ENCODE measurements at regions of chr9 and their contacts with region 1.

Region 1: GRCh38 chr9:132391449-132391848 is 15.2 kb downstream of the TTF1 start:
- DNase-seq: no peak
- H3K4me3 ChIP-seq: no peak overlapping the region
- H3K27ac ChIP-seq: no peak overlapping the region
- H3K4me1 ChIP-seq: no peaks in the 10 kb centered on the region
- H3K27me3 ChIP-seq: no peaks in the 10 kb centered on the region
- CTCF ChIP-seq: no peak

Region 2: DNA sequence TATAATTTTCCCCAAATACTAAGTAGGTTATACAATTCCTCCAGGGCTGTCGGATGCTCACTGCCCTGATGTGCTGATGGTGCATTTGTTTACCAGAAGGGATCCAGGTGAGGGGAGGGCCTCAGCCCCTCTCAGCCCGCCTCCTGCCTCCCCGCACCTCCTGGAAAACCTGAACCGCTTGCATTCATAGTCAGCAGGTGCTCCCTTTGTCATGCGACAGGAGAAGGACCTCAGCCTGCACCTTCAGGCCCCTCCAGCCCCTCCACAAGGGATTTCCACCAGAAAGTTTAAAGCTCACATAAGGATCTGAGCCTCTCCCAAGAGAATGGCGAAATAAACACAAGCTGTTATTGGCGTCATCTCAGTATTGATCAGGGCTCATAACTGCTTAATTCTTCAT is 266.1 kb before region 1 on chr9:
- CTCF ChIA-PET with region 1: no interaction called
- POLR2A ChIA-PET with region 1: no interaction called
- intact Hi-C with region 1: no loop called
- DNase-seq: no peak
- H3K4me3 ChIP-seq: no peak overlapping the region
- H3K27ac ChIP-seq: no peak overlapping the region
- H3K4me1 ChIP-seq: no peaks in the 10 kb centered on the region
- H3K27me3 ChIP-seq: peaks cover 99% of the 10 kb centered on the region
- CTCF ChIP-seq: no peak

Region 3: DNA sequence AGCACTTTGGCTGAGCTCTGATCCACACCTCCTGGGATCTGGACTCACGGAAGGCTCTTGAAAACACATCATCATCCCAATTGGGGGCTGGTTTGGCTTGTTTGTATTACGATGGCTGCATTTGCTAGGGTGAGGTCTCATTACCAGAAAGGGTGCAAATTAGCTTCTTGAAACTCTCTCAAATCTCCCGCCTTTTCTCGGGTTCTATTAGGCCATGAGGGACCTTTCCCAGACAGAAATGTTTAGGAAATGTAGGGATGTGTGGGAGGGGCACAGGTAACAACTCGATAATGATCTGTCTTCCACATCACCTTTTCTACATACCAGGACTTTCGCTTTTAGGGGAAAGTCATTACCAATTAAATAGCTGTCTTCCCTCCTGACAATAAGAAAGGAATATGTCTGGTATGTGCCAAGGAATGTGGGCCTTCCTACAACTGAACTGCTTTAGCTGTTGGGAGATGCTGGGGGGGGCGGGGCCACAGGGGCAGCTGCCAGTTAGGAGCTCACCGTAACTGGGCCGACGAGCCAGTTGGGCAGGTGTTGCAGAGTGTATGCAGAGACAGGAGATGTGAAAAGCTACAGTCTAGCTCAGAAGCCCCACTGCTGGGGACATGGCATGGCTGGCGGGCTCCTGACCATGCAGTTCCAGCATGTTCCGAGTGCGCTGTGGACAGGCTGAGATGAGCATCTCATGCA is 415.4 kb after region 1 on chr9:
- CTCF ChIA-PET with region 1: no interaction called
- POLR2A ChIA-PET with region 1: interaction called, 16 read pairs
- intact Hi-C with region 1: no loop called
- DNase-seq: peak; percentile 78 to 83
- H3K4me3 ChIP-seq: no peak overlapping the region
- H3K27ac ChIP-seq: no peak overlapping the region
- H3K4me1 ChIP-seq: 0 out of 2 replicates have a peak, but pooled peaks cover 4% of the 10 kb centered on the region
- H3K27me3 ChIP-seq: peaks cover 3% of the 10 kb centered on the region; the same call in 1 of the 2 replicates
- CTCF ChIP-seq: no peak

Measured in PC-9 (cell line).